Posterior vena cava (tissue), 2 donors: ENCODE measurements at regions of chr5 and their contacts with region 1.

Region 1: GRCh38 chr5:128213340-128213739 is 129.8 kb downstream of the SLC12A2 start:
- DNase-seq: no peak

Region 2: DNA sequence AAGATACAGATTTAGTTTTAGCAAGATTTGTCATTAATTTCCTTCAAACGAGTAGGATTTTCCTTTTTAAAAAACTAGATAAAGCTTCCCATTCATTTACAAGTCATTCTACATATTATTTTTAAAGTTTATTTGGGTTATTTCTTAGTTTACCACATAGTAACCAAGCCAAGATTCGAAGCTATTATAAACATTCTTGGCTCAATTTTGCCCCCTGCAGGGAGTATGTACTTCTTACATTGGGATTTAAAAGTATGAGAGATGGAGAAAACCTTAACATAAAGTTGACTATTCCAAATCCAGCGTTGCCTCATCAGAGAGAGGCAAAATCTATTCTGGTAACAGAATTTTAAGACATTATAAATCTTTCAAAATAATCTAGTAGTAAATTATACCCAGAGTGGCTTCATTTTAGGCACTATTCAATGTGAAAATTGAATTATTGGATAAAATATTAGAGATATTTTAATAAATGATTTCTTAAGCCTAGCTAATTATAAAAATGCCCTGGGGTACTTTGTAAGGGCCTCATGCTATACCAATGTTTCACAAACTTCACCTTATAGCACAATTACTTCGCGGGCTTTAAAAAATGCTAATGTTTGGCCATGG is 285.6 kb after region 1 on chr5:
- intact Hi-C with region 1: loop called in 1 of 2 experiments (anchors 10 kb)
- DNase-seq: no peak

Region 3: DNA sequence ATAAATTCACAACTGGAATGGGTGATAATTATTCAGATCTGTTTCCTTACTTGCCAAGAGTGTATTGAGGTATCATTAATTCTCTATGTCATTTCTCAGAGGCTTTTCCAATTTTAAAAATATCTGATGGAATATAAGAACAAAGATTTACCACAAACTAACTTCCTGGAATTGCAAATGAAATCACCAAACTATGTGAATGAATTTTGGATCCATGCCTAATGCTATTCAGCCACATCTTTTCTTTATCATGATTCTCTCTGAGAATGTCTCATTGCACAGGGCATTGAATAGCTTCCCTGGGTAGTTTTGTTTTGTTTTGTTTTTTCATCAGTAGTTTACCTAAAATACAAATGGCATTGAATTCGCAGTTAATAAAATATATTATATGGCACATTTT is 471.6 kb after region 1 on chr5:
- intact Hi-C with region 1: no loop called
- DNase-seq: no peak

Region 4: GRCh38 chr5:128844354-128844923 is 631.1 kb after region 1 on chr5:
- intact Hi-C with region 1: loop called in 1 of 2 experiments (anchors 5 kb)
- DNase-seq: no peak